ENCODE measurements at regions of chrX and their contacts with region 1.

Region 1: GRCh38 chrX:154490414-154491083 is at the start of gene SLC10A3:
- DNase-seq: peak; percentile 92 to 97 (median 95)
- ATAC-seq: peak; percentile 88 to 95 (median 91)
- H3K4me3 ChIP-seq: peak within 1 kb of the TSS; percentile 32 to 87 (median 69)
- H3K27ac ChIP-seq: peak within 1 kb of the TSS; percentile 87 to 97 (median 94)
- H3K4me1 ChIP-seq: peaks cover 0 to 19% (median 5%) of the 10 kb centered on the region in 12 donors
- H3K27me3 ChIP-seq: no peaks in the 10 kb centered on the region
- CTCF ChIP-seq: peak in 2 of 12 donors; percentile 12 to 17
- POLR2A ChIP-seq: peak; percentile 87 to 96
- total RNA-seq, gene SLC10A3: 8.3 to 33.3 (median 15.5) TPM

Region 2: GRCh38 chrX:153875391-153876111 is 615.0 kb before region 1 on chrX:
- intact Hi-C with region 1: no loop called
- DNase-seq: peak in 3 of 5 donors; percentile 40 to 72 (median 60)
- ATAC-seq: peak in 3 of 4 donors; percentile 64 to 88 (median 79)
- H3K4me3 ChIP-seq: no peak overlapping the region
- H3K27ac ChIP-seq: no peak overlapping the region
- H3K4me1 ChIP-seq: no peaks in the 10 kb centered on the region
- H3K27me3 ChIP-seq: peaks cover 0 to 64% (median 6%) of the 10 kb centered on the region in 9 donors
- CTCF ChIP-seq: no peak
- POLR2A ChIP-seq: no peak

Region 3: GRCh38 chrX:154327038-154327820 is 163.3 kb before region 1 on chrX:
- intact Hi-C with region 1: no loop called
- DNase-seq: peak in 1 of 5 donors; percentile 24
- ATAC-seq: peak; percentile 41 to 59 (median 56)
- H3K4me3 ChIP-seq: no peak overlapping the region
- H3K27ac ChIP-seq: peak overlapping the region in 9 of 12 donors; percentile 29 to 75 (median 59)
- H3K4me1 ChIP-seq: peaks cover 0 to 31% (median 2%) of the 10 kb centered on the region in 12 donors
- H3K27me3 ChIP-seq: peaks cover 0 to 13% (median 0%) of the 10 kb centered on the region in 9 donors
- CTCF ChIP-seq: no peak
- POLR2A ChIP-seq: no peak

Region 4: DNA sequence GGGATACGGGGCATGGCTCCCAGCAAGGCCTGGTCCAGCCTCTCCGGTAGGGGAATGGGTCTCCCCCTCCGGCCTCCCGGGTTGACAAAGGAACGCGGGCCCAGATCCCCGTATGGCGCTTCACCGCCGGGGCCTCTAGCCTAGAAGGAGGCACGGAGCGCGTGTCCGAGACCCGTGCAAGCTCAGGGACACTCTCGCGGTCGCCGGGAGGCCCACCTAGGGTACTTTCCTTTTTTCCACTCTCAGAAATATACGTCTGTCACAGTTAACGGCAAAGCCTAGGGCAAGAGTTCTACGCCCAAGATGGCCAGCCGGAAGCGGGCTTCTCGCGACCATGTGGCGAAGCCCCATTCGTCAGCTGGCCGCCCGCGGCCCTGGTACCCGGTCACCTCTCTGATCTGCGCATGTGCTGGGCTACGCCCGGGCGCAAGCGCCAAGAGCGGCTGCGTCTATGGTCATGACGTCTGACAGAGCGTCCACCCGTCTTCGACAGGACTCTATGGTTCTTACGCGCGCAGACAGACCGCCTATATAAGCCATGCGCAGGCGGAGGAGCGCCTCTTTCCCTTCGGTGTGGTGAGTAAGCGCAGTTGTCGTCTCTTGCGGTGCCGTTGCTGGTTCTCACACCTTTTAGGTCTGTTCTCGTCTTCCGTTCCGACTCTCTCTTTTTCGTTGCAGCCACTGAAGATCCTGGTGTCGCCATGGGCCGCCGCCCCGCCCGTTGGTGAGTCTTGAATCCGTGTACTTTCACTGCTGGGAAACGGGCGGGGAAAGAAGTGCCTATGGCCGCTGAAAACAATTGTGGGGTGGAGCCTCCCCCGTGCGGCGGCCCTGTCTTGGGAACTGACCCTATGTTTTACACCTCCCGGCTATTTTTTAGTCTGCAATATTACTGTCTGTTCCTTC is 92.5 kb before region 1 on chrX and contains the start of gene RPL10:
- intact Hi-C with region 1: loop called in 1 of 10 experiments (anchors 5 kb)
- DNase-seq: peak; percentile 92 to 97 (median 96)
- ATAC-seq: peak; percentile 87 to 97 (median 92)
- H3K4me3 ChIP-seq: peak within 1 kb of the TSS; percentile 67 to 99 (median 86)
- H3K27ac ChIP-seq: peak within 1 kb of the TSS; percentile 98 to 100 (median 98)
- H3K4me1 ChIP-seq: peaks cover 0 to 16% (median 10%) of the 10 kb centered on the region in 12 donors
- H3K27me3 ChIP-seq: no peaks in the 10 kb centered on the region
- CTCF ChIP-seq: no peak
- POLR2A ChIP-seq: peak in 1 of 2 donors; percentile 91
- total RNA-seq, gene RPL10: 1,381 to 3,072 (median 2,052) TPM

Region 5: DNA sequence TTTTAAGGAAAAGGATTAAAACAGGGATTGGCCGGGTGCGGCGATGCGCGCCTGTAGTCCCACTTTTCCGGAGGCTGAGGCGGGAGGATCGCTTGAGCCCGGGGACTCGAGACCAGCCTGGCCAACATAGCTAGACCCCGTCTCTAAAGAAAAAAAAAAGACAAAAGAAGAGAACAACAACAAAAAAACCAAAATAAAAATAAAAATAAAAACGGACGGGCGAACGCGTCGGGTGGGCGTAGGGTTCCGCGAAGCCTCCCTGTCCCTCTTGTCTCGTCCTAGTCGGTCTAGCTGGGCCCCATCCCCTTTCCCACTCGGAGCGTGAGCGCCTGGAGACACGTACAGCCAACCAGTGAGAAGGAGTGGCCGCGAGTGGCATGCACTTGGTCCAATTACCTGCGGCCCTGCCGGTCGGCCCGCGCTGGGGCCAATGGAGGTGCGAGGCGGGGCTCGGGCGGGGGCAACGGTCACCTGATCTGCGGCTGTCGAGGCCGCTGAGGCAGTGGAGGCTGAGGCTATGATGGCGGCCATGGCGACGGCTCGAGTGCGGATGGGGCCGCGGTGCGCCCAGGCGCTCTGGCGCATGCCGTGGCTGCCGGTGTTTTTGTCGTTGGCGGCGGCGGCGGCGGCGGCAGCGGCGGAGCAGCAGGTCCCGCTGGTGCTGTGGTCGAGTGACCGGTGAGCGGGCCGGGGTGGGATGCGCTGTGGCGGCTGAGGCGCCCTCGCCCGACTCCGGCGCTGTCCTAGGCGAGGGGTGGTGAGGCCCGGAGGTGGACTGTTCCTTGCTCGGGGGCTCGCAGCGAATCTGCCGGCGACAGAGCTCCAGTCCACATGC is 62.2 kb before region 1 on chrX and contains the start of gene ATP6AP1:
- intact Hi-C with region 1: loop called in 1 of 10 experiments (anchors 2 kb)
- DNase-seq: peak; percentile 94 to 96 (median 95)
- ATAC-seq: peak; percentile 96 to 99 (median 98)
- H3K4me3 ChIP-seq: peak within 1 kb of the TSS; percentile 51 to 98 (median 78)
- H3K27ac ChIP-seq: peak within 1 kb of the TSS; percentile 8 to 90 (median 80)
- H3K4me1 ChIP-seq: peaks cover 0 to 28% (median 7%) of the 10 kb centered on the region in 12 donors
- H3K27me3 ChIP-seq: no peaks in the 10 kb centered on the region
- CTCF ChIP-seq: no peak
- POLR2A ChIP-seq: peak in 1 of 2 donors; percentile 70
- total RNA-seq, gene ATP6AP1: 67.7 to 127 (median 84.2) TPM

Region 6: GRCh38 chrX:154515878-154516655 is 25.5 kb after region 1 on chrX and contains the start of gene FAM3A:
- intact Hi-C with region 1: loop called in 2 of 10 experiments (anchors 1 to 2 kb)
- DNase-seq: peak; percentile 94 to 97 (median 95)
- ATAC-seq: peak; percentile 94 to 97 (median 97)
- H3K4me3 ChIP-seq: peak within 1 kb of the TSS; percentile 59 to 97 (median 76)
- H3K27ac ChIP-seq: peak within 1 kb of the TSS; percentile 89 to 98 (median 93)
- H3K4me1 ChIP-seq: peaks cover 0 to 28% (median 10%) of the 10 kb centered on the region in 12 donors
- H3K27me3 ChIP-seq: peaks cover 0 to 5% (median 0%) of the 10 kb centered on the region in 9 donors
- CTCF ChIP-seq: no peak
- POLR2A ChIP-seq: peak; percentile 82 to 94
- total RNA-seq, gene FAM3A: 36.2 to 82.6 (median 48.6) TPM

Region 7: GRCh38 chrX:154986826-154987576 is 496.5 kb after region 1 on chrX:
- intact Hi-C with region 1: no loop called
- DNase-seq: no peak
- ATAC-seq: no peak
- H3K4me3 ChIP-seq: no peak overlapping the region
- H3K27ac ChIP-seq: no peak overlapping the region
- H3K4me1 ChIP-seq: peaks cover 0 to 4% (median 0%) of the 10 kb centered on the region in 12 donors
- H3K27me3 ChIP-seq: no peaks in the 10 kb centered on the region
- CTCF ChIP-seq: peak in 4 of 12 donors; percentile 19 to 32 (median 25)
- POLR2A ChIP-seq: no peak

Measured in heart left ventricle (tissue), 16 donors.